ENCODE measurements at regions of chr11 and their contacts with region 1.

Region 1: DNA sequence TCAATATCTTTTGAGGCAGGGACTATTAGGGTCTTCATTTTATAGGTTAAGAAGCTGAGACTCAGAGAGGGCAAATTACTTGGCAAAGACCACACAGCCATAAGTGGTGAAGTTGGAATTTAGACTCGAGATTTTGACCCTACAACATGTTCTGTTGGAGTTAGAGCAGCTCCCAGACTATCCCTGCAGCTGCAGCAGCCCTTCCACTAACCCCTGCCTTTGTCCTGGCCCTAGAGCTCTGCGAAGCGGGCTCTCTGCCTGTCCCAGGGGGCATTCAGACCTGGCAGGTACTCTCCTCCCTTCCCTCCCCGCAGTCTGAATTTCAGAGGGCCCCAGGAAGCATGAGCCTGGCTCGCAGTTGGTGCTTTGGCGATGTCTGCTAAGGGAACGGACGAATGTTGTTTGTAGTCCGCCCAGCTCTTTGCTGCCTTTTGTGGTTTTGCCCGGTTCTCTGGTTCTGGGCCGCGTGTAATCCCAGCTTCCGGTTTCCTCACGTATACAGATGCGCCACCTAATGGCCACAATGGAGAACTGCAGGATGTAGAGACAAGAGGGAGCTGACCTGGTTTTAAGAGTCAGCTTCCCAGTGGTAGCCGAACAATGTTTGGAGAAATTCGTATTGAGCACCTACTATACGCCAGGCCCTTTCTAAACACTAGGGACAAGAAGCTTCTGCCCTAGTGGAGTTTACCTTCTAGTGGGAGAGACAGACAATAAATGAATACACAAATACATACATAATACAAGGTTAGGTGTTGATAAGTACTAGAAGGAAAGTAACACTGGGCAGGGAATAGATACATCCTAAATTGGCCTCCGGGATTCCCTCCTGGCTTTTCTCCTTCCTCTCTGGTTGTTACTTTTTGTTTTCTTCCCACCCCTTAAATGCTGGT is 125.2 kb downstream of the ST3GAL4 start:
- DNase-seq: peak; percentile 79
- H3K4me3 ChIP-seq: no peak overlapping the region
- H3K27ac ChIP-seq: peak overlapping the region; percentile 16 to 56
- H3K4me1 ChIP-seq: no peaks in the 10 kb centered on the region
- H3K27me3 ChIP-seq: no peaks in the 10 kb centered on the region
- CTCF ChIP-seq: peak; percentile 88 to 96 (median 95)
- POLR2A ChIP-seq: no peak

Region 2: GRCh38 chr11:126282736-126283591 is 197.7 kb before region 1 on chr11 and contains the start of gene TIRAP:
- intact Hi-C with region 1: no loop called
- DNase-seq: peak; percentile 56
- H3K4me3 ChIP-seq: peak within 1 kb of the TSS; percentile 60 to 66
- H3K27ac ChIP-seq: peak within 1 kb of the TSS; percentile 89 to 90
- H3K4me1 ChIP-seq: no peaks in the 10 kb centered on the region
- H3K27me3 ChIP-seq: no peaks in the 10 kb centered on the region
- CTCF ChIP-seq: peak in 2 of 4 experiments; percentile 28 to 45
- POLR2A ChIP-seq: peak; percentile 42
- total RNA-seq, gene TIRAP: 15.2 to 19.9 TPM

Region 3: GRCh38 chr11:126310228-126310991 is 170.2 kb before region 1 on chr11:
- intact Hi-C with region 1: loop called (anchors 2 kb)
- DNase-seq: peak; percentile 72
- H3K4me3 ChIP-seq: no peak overlapping the region
- H3K27ac ChIP-seq: no peak overlapping the region
- H3K4me1 ChIP-seq: no peaks in the 10 kb centered on the region
- H3K27me3 ChIP-seq: no peaks in the 10 kb centered on the region
- CTCF ChIP-seq: peak; percentile 75 to 91 (median 86)
- POLR2A ChIP-seq: no peak

Region 4: DNA sequence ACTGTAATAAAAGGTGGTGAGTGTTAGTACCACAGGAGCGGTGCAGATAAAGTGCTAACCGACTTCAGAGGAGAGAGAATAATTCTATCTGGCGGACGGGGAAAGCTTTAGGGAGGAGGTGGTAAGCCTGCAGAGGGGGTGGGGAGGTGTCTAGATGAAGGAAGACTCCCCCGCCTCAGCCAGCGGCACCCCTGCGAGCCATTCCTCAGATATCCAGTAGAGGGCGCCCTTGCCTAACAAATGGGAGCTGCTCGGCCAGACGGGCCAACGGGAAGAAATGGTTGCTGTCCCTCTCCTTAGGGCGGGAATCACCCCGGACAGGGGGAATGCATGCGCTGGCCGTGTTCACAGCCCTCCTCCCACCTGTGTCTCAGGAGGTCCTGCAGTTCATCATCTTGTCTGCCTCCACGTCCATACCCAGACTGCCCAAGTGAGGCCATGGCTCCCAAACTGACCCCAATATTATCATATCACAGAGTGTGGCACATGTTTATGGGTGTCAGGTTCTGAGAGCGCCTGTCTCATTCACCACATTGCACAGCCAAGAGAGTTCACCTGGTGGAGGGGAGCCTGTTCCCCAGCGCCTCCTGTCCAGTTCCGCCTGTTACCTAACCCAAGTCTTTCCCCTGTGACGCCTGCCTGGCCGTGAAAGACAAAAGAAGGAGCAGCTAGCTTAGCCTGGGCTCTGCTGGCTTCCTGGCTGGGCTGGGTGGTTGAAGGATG is 39.7 kb before region 1 on chr11:
- intact Hi-C with region 1: loop called (anchors 5 kb)
- DNase-seq: peak; percentile 59
- H3K4me3 ChIP-seq: no peak overlapping the region
- H3K27ac ChIP-seq: no peak overlapping the region
- H3K4me1 ChIP-seq: no peaks in the 10 kb centered on the region
- H3K27me3 ChIP-seq: no peaks in the 10 kb centered on the region
- CTCF ChIP-seq: peak; percentile 83 to 96 (median 92)
- POLR2A ChIP-seq: no peak